SK-N-SH (cell line): ENCODE measurements at regions of chr10 and their contacts with region 1.

Region 1: DNA sequence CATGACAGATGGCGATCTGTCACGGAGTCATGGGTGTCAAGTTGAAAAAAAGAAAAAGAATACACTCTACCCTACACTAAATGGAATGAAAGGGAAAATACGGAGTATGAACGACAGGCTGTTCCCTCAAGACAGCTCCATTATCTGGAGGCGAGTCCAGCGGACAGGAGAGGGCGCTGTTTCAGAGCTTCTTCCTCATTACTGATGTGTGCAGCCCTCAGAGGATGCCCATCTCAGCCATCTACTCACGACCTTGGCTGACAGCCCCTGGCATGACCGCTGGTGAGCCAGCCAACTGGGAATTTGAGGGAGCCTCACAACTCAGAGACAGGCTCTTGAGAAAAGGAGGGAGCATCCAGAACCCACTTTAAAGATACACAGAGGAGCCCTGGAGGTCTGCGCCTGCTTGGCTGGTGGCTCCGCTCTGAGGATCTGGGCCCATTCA is 49.6 kb upstream of the SMNDC1 start:
- DNase-seq: peak; percentile 74
- H3K4me3 ChIP-seq: peak overlapping the region in 1 of 2 experiments; percentile 9; a peak in 1 of 4 replicates
- H3K27ac ChIP-seq: peak overlapping the region in 1 of 2 experiments; percentile 74; a peak in 2 of 4 replicates
- H3K4me1 ChIP-seq: peaks cover 9 to 17% of the 10 kb centered on the region in 2 experiments; a peak in 3 of 4 replicates
- H3K27me3 ChIP-seq: no peaks in the 10 kb centered on the region
- CTCF ChIP-seq: peak; percentile 87
- EP300 ChIP-seq: no peak
- RAD21 ChIP-seq: peak; percentile 83

Region 2: GRCh38 chr10:110368002-110368401 is 13.7 kb after region 1 on chr10:
- CTCF ChIA-PET with region 1: interaction called, 31 read pairs
- POLR2A ChIA-PET with region 1: no interaction called
- DNase-seq: no peak
- H3K4me3 ChIP-seq: no peak overlapping the region
- H3K27ac ChIP-seq: no peak overlapping the region
- H3K4me1 ChIP-seq: peaks cover 0 to 12% of the 10 kb centered on the region in 2 experiments; a peak in 2 of 4 replicates
- H3K27me3 ChIP-seq: no peaks in the 10 kb centered on the region
- CTCF ChIP-seq: no peak
- EP300 ChIP-seq: no peak
- RAD21 ChIP-seq: no peak

Region 3: DNA sequence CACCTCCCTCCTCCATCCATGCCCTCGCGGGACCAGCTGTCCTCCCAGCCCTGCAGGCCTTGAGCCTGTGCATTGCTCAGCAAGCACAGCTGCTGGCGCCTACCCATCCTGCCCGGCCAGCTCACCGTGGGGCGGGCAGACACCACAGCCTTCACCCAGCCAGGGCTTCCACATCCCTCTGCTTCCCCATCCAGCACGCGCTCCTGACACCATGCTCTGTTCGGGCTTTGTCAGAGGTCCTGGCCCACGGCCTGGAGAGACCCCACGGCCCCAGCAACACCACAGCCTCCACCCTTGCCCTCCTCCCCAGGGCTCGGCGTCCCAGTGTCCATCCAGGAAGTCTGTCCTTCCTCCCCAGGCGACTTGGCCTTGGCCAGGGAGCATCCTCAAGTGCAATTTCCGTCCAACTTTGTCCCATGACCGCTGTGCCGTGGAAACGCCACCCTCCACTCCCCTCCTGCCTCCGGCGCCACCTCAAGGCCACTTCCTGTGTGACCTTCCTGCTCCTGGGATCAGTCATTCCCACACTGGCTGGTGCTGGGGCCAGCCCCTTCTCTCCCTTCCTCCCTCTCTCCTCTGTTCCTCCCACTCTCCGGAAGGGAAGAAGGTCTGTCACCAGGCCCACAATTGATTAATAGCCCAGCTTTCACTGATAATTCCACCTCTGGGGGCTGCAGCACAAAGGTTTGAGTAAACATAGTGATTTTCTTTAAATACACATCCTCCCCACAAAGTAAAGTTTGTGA is 21.9 kb after region 1 on chr10:
- CTCF ChIA-PET with region 1: interaction called, 14 read pairs
- POLR2A ChIA-PET with region 1: no interaction called
- DNase-seq: no peak
- H3K4me3 ChIP-seq: no peak overlapping the region
- H3K27ac ChIP-seq: no peak overlapping the region
- H3K4me1 ChIP-seq: peaks cover 2 to 10% of the 10 kb centered on the region in 2 experiments; a peak in 1 of 4 replicates
- H3K27me3 ChIP-seq: no peaks in the 10 kb centered on the region
- CTCF ChIP-seq: no peak
- EP300 ChIP-seq: no peak
- RAD21 ChIP-seq: no peak

Region 4: GRCh38 chr10:110502851-110503301 is 148.5 kb after region 1 on chr10:
- CTCF ChIA-PET with region 1: interaction called, 10 read pairs
- POLR2A ChIA-PET with region 1: no interaction called
- DNase-seq: no peak
- H3K4me3 ChIP-seq: peak overlapping the region; percentile 3 to 21; a peak in 1 of 4 replicates
- H3K27ac ChIP-seq: peak overlapping the region; percentile 80 to 90
- H3K4me1 ChIP-seq: peaks cover 39 to 51% of the 10 kb centered on the region in 2 experiments
- H3K27me3 ChIP-seq: no peaks in the 10 kb centered on the region
- CTCF ChIP-seq: no peak
- EP300 ChIP-seq: peak in 1 of 2 experiments; percentile 41; a peak in 1 of 4 replicates
- RAD21 ChIP-seq: no peak

Region 5: DNA sequence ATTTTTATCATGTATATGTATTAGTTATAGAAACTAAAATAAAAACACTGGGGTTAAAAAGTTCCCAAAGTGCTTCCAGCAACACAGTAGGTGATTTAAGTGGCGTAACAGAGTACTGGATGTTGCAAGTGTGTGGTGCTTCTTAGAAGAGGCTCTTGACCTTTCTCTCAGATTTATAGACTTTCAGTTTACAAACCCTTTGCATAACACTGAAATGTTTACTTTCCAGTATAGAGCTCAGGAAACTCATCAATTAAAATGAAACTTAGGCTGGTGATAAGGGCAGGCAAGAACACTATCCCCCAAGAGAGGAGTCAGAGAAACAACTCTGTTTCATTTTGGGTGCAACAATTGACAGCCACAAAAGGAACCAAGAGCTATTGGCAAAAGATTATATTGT is 185.7 kb after region 1 on chr10:
- CTCF ChIA-PET with region 1: interaction called, 112 read pairs
- POLR2A ChIA-PET with region 1: no interaction called
- DNase-seq: no peak
- H3K4me3 ChIP-seq: no peak overlapping the region
- H3K27ac ChIP-seq: no peak overlapping the region
- H3K4me1 ChIP-seq: peaks cover 0 to 20% of the 10 kb centered on the region in 2 experiments; a peak in 2 of 4 replicates
- H3K27me3 ChIP-seq: no peaks in the 10 kb centered on the region
- CTCF ChIP-seq: no peak
- EP300 ChIP-seq: no peak
- RAD21 ChIP-seq: no peak